ENCODE measurements at regions of chr19 and their contacts with region 1.

Region 1: DNA sequence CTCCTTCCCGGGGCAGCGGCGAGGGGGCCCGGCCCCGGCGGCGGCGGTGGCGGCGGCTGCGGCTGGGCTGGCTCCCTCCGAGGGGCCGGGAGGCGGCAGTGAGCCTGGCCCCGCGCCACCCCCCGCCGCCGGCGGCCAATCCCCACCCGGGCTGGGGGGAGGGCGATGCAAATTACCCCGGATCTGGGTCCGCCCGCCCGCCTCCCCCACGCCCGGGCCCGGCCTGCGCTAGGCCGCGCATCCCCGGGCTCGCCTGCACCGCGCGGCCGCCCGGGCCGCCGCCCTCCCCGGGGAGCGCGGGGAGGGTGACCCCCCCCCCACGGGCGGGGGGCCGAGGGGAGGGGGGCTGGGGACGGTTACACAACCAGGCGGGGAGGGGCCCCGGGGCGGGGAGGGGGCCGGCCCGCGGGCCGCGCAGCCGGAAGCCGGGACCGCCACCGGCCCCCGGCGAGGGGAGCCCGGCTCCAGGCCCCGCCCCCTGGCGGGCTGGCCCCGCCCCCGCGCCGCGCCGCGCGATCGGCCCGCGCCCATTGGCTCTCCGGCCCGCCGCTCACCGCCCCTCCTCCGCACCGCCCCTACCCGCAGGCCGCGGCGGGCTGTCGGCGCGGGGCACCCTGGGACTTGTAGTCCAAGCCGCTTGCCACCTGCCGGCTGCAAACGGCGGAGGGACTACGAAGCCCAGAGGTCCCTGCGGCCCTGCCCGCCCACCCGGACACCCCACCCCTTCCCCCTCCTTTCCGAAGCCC is 1.1 kb downstream of the ZBTB7A start:
- DNase-seq: peak; percentile 94 to 99 (median 97)
- ATAC-seq: peak; percentile 72
- H3K4me3 ChIP-seq: peak overlapping the region; percentile 86 to 89
- H3K4me3 Mint-ChIP-seq: peak overlapping the region; percentile 73
- H3K27ac ChIP-seq: no peak overlapping the region
- H3K27ac Mint-ChIP-seq: no peak overlapping the region
- H3K4me1 ChIP-seq: peaks cover 58% of the 10 kb centered on the region
- H3K4me1 Mint-ChIP-seq: peaks cover 40% of the 10 kb centered on the region
- H3K27me3 ChIP-seq: no peaks in the 10 kb centered on the region
- H3K27me3 Mint-ChIP-seq: no peaks in the 10 kb centered on the region
- CTCF ChIP-seq: no peak

Region 2: DNA sequence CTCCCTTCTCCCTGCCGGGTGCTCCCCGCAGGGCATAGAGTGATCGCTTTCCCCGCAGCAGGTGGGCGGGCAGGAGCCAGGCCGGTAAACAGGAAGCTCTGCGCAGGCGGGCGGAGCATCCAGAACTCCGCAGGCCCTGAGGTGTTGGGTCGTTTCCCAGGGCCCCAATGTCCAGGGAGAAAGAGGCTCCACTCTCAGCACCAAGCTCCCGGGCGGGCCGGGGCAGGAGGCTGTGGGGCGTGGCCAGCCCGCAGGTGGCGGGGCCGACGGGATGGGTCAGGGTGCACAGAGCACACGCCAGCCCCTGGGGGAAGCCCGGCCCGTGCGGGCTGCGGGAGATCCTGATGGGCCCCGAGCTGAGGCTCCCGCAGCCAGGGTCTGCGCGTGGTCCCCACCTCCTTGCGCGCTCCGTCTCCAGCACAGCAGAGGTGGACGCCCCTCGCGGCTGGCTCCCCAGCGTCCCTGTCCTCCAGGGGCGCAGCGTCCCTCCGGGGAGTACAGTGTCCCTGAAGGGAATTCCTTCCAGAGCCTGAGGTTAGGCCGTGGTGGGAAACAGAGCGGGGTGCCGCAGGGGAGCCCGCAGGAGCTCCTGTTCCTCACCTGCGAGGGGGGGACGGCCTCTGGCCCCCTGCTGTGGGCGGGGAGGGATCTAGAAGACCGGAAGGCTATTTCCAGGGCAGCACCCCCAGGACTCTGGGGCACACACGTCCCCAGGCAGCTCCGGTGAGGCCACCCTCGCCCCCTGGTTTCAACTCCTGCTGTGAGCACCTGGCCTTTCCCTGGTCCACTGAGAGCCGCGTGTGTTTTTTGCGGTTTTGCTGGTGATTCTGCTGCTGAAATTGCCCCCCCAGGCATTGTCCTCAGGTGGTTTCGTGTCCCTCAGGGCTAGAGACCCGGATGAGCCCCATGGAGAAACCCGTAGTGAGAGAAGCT is 377.6 kb before region 1 on chr19:
- CTCF ChIA-PET with region 1: no interaction called
- POLR2A ChIA-PET with region 1: no interaction called
- intact Hi-C with region 1: no loop called
- DNase-seq: peak in 8 of 9 experiments; percentile 32 to 83 (median 46)
- ATAC-seq: peak; percentile 61
- H3K4me3 ChIP-seq: peak overlapping the region; percentile 56 to 74
- H3K4me3 Mint-ChIP-seq: peak overlapping the region; percentile 82
- H3K27ac ChIP-seq: peak overlapping the region; percentile 56 to 76
- H3K27ac Mint-ChIP-seq: peak overlapping the region; percentile 91
- H3K4me1 ChIP-seq: peaks cover 31% of the 10 kb centered on the region
- H3K4me1 Mint-ChIP-seq: peaks cover 40% of the 10 kb centered on the region
- H3K27me3 ChIP-seq: no peaks in the 10 kb centered on the region
- H3K27me3 Mint-ChIP-seq: no peaks in the 10 kb centered on the region
- CTCF ChIP-seq: no peak

Region 3: DNA sequence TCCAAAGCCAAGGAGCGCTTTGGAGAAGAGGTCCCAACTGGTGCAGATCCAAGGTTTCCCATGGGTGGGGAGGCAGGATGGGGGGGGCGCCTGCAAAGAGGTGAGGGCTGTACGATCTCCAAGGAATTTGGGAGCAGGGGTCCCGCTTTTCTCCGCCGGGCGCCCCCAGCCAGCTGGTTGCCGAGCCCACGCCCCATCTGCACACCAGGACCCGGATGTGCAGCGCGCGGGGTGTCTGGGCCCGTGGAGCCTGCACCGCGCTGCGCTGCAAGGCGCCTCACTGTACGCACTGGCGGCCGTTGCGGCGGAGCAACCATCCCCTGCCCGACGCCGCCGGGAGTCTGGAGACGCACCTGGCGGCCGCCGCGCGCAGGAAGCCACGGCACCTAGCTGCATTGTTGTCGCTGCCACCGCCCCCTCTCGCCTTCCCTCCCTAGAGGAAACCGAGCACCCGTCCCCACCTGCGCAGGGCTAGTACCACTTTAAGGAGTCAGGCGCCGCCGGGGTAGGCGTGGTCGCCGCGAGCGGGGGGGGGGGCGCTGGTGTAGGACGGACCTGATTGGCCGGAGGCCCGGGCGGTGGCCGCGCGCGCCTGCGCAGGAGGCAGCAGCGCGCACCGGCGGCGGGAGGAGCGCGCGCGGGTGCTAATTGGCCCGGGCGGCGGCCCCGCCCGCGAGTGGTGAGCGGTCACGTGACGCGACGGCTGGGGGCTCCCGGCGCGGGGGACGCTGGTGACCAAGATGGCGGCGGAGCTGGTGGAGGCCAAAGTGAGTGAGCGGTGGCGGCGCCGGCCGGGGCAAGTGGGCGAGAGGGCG is 58.4 kb before region 1 on chr19 and contains the start of gene PIAS4:
- CTCF ChIA-PET with region 1: no interaction called
- POLR2A ChIA-PET with region 1: interaction called, 12 read pairs
- intact Hi-C with region 1: loop called (anchors 1 kb)
- DNase-seq: peak; percentile 89 to 99 (median 96)
- ATAC-seq: peak; percentile 91
- H3K4me3 ChIP-seq: peak within 1 kb of the TSS; percentile 68 to 87
- H3K4me3 Mint-ChIP-seq: peak within 1 kb of the TSS; percentile 83
- H3K27ac ChIP-seq: peak within 1 kb of the TSS; percentile 46 to 58
- H3K27ac Mint-ChIP-seq: peak within 1 kb of the TSS; percentile 84
- H3K4me1 ChIP-seq: peaks cover 38% of the 10 kb centered on the region
- H3K4me1 Mint-ChIP-seq: peaks cover 24% of the 10 kb centered on the region
- H3K27me3 ChIP-seq: no peaks in the 10 kb centered on the region
- H3K27me3 Mint-ChIP-seq: no peaks in the 10 kb centered on the region
- CTCF ChIP-seq: no peak
- total RNA-seq, gene PIAS4: 11.6 to 14.9 TPM

Region 4: GRCh38 chr19:4089400-4089908 is 23.9 kb after region 1 on chr19:
- CTCF ChIA-PET with region 1: no interaction called
- POLR2A ChIA-PET with region 1: interaction called, 7 read pairs
- intact Hi-C with region 1: loop called (anchors 2 kb)
- DNase-seq: peak in 8 of 9 experiments; percentile 35 to 83 (median 55)
- ATAC-seq: peak; percentile 38
- H3K4me3 ChIP-seq: no peak overlapping the region
- H3K4me3 Mint-ChIP-seq: peak overlapping the region; percentile 66
- H3K27ac ChIP-seq: peak overlapping the region; percentile 41 to 78
- H3K27ac Mint-ChIP-seq: peak overlapping the region; percentile 94
- H3K4me1 ChIP-seq: peaks cover 46% of the 10 kb centered on the region
- H3K4me1 Mint-ChIP-seq: peaks cover 44% of the 10 kb centered on the region
- H3K27me3 ChIP-seq: no peaks in the 10 kb centered on the region
- H3K27me3 Mint-ChIP-seq: no peaks in the 10 kb centered on the region
- CTCF ChIP-seq: no peak

Region 5: DNA sequence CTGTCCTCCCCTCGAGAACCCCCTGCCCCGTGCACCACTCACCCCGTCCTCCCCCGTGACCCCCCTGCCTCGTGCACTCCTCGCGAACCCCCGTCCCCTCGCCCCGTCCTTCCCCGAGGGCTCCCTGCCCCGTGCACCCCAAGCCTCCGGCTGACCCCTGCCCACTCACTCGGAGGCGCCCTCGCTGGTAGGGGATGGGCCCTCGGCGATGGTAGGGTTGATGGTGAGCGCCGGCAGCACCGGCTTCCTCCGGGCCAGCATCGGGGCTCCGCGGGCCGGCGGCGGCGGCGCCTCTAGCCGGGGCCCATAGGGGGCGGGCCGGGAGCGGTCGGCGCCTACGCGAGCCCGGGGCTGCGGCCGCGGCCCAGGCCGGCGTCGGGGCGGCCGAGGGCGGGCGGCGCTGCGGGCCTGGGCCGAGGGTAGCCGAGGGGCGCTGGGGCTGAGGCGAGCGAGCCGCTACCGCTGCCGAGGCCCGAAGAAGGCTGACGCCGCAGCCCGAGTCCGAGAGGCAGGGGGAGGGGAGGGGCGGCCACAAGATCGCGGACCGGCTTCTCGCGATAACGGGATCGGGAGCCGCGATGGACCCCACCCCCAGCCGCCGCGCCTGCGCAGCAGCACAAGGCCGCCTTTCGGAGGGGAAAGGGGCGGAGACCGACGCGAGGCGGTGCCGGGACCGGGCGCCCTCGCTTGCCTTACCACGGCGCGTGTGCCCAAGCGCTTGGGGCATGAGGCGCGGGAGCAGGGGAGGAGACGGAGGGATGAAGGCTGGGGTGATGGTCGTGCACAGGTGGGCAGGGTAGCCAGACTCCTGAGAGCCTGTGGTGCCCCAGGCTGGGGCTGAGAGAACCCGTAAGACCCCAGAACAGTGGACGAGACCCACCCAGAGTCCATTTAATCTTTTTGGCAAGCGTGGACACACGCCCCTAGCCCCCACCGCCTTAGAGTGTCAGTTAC is 58.3 kb after region 1 on chr19 and contains the start of gene MAP2K2:
- CTCF ChIA-PET with region 1: no interaction called
- POLR2A ChIA-PET with region 1: no interaction called
- intact Hi-C with region 1: loop called (anchors 1 kb)
- DNase-seq: peak; percentile 91 to 98 (median 97)
- ATAC-seq: peak; percentile 96
- H3K4me3 ChIP-seq: peak within 1 kb of the TSS; percentile 57 to 72
- H3K4me3 Mint-ChIP-seq: peak within 1 kb of the TSS; percentile 93
- H3K27ac ChIP-seq: peak within 1 kb of the TSS; percentile 52 to 73
- H3K27ac Mint-ChIP-seq: peak within 1 kb of the TSS; percentile 91
- H3K4me1 ChIP-seq: peaks cover 17% of the 10 kb centered on the region
- H3K4me1 Mint-ChIP-seq: peaks cover 25% of the 10 kb centered on the region
- H3K27me3 ChIP-seq: no peaks in the 10 kb centered on the region
- H3K27me3 Mint-ChIP-seq: no peaks in the 10 kb centered on the region
- CTCF ChIP-seq: no peak
- total RNA-seq, gene MAP2K2: 73.9 to 76.8 TPM